ENCODE measurements at regions of chr5 and their contacts with region 1.

Region 1: GRCh38 chr5:32628048-32628803 is 42.9 kb downstream of the SUB1 start:
- DNase-seq: peak; percentile 43
- H3K4me3 Mint-ChIP-seq: no peak overlapping the region
- H3K27ac Mint-ChIP-seq: no peak overlapping the region
- H3K4me1 Mint-ChIP-seq: peaks cover 14% of the 10 kb centered on the region
- H3K27me3 Mint-ChIP-seq: no peaks in the 10 kb centered on the region
- CTCF ChIP-seq: no peak

Region 2: DNA sequence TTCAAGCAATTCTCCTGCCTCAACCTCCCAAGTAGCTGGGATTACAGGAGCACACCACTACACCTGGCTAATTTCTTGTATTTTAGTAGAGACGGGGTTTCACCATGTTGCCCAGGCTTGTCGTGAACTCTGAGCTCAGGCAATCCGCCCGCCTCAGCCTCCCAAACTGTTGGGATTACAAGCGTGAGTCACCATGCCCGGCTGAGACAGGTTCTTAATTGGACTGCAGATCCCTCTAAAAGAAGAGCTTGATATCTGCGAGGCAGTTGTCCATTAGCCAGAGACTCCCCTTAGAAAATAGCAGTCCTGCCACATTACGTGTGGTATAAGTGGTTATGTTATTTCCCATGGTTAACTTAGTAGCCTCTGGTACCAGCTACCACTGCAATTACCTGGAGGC is 36.3 kb after region 1 on chr5:
- CTCF ChIA-PET with region 1: interaction called, 3 read pairs
- POLR2A ChIA-PET with region 1: interaction called, 10 read pairs
- intact Hi-C with region 1: no loop called
- DNase-seq: peak; percentile 26
- H3K4me3 Mint-ChIP-seq: no peak overlapping the region
- H3K27ac Mint-ChIP-seq: no peak overlapping the region
- H3K4me1 Mint-ChIP-seq: no peaks in the 10 kb centered on the region
- H3K27me3 Mint-ChIP-seq: no peaks in the 10 kb centered on the region
- CTCF ChIP-seq: no peak